A549 (cell line): ENCODE measurements at regions of chr5 and their contacts with region 1.

Region 1: GRCh38 chr5:39119404-39120051 is 45.3 kb upstream of the RICTOR start:
- DNase-seq: no peak
- ATAC-seq: no peak; a peak in 1 of 6 replicates
- H3K4me3 ChIP-seq: no peak overlapping the region; the same call in 2 of the 3 replicates
- H3K27ac ChIP-seq: peak overlapping the region in 1 of 2 experiments; percentile 59; a peak in 3 of 6 replicates
- H3K4me1 ChIP-seq: peaks cover 49% of the 10 kb centered on the region; the same call in 2 of the 3 replicates
- CTCF ChIP-seq: no peak
- EP300 ChIP-seq: no peak
- POLR2A ChIP-seq: no peak
- RAD21 ChIP-seq: no peak

Region 2: DNA sequence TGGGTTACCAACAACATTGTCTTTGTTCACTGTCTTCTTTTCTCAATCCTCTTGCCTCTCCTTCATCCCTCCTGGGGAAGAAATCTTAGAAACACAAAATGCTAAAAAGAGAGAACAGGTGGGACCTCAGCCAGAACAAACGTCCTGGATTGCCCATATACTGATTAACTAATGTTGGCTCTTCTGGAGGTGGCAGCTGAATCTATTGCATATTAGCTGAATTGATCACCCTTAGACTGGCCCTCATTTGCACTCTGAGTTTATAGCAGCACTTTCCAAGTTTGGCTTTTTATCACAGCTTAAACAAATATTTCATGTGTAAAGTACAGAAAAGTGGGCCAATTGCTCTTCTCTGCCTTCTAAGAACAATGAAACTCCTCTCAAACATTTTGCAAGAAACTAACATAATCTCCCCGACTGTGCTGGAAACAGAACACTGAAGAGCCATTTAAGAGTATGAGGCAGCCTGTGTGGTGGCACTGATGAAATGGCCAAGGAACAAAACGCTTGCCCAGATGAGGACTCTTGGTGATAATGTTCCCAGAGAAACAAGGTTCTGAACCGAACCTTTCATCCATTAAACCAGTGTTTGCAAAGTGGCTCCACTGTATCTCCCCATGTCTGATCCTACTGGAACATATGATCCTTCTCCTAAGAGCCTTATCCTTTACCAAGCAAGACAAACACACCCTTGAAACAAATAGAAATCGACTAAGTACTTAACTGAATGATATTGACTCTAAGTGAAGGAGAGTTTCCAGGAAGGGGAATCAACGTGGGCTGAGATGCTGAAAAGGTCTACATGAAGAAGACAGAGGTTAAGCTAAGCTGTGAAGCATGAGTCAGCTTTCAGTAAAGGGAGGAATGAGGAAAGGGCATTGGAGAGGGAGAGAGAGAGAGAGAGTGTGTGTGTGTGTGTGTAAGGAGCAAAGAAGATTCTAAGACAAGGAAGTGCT is 479.9 kb before region 1 on chr5:
- CTCF ChIA-PET with region 1: no interaction called
- POLR2A ChIA-PET with region 1: no interaction called
- DNase-seq: peak in 1 of 2 experiments; percentile 40
- ATAC-seq: peak; percentile 57 to 60; a peak in 4 of 6 replicates
- H3K4me3 ChIP-seq: no peak overlapping the region
- H3K27ac ChIP-seq: 0 out of 6 replicates have a peak overlapping the region, but pooled peaks of 1 of the 2 experiments have one; percentile 4
- H3K4me1 ChIP-seq: peaks cover 9% of the 10 kb centered on the region; the same call in 2 of the 3 replicates
- CTCF ChIP-seq: no peak
- EP300 ChIP-seq: no peak
- POLR2A ChIP-seq: no peak
- RAD21 ChIP-seq: no peak

Region 3: GRCh38 chr5:39031041-39031440 is 88.5 kb before region 1 on chr5:
- CTCF ChIA-PET with region 1: no interaction called
- POLR2A ChIA-PET with region 1: no interaction called
- DNase-seq: no peak
- ATAC-seq: no peak
- H3K4me3 ChIP-seq: no peak overlapping the region
- H3K27ac ChIP-seq: no peak overlapping the region
- H3K4me1 ChIP-seq: peaks cover 20% of the 10 kb centered on the region; the same call in 2 of the 3 replicates
- CTCF ChIP-seq: no peak
- EP300 ChIP-seq: no peak
- POLR2A ChIP-seq: no peak
- RAD21 ChIP-seq: no peak

Region 4: DNA sequence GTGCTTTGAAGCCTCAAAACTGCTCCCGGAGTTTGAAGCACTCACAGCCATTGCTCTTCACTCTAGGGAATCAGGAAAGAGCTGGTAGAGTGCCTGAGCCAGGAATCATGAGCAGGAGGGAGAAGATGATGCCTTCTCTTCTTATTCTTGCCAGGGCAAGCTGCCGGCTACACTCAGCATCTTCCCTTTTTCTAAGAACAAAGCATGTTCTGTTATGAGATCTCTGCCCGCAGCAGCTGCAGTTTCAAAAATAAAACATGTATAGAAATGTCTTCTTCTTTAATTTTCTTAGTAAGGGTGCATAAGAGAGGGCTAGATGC is 12.6 kb after region 1 on chr5:
- CTCF ChIA-PET with region 1: interaction called, 13 read pairs
- POLR2A ChIA-PET with region 1: interaction called, 3 read pairs
- DNase-seq: no peak
- ATAC-seq: peak; percentile 40 to 66; a peak in 3 of 6 replicates
- H3K4me3 ChIP-seq: no peak overlapping the region
- H3K27ac ChIP-seq: peak overlapping the region; percentile 36 to 54
- H3K4me1 ChIP-seq: peaks cover 32% of the 10 kb centered on the region
- CTCF ChIP-seq: no peak
- EP300 ChIP-seq: no peak
- POLR2A ChIP-seq: no peak
- RAD21 ChIP-seq: no peak

Region 5: DNA sequence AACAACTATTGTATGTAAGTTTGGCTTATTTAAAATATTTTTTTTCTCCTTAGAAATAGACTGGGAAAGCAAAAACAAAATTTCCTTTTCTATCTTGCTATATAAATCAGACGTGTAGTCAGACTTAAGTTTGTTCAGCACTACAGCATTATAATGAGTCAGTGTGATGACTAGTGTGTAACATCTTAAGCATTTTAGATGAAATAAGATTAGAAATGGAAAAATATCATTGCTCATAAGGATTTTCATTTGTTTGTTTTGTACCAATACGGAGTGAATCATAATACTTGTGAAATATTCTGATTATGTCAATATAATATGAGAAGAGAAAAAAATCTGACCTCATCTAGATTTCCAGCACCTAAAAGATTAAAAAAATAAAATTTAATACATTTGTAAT is 19.4 kb after region 1 on chr5:
- CTCF ChIA-PET with region 1: interaction called, 10 read pairs
- POLR2A ChIA-PET with region 1: no interaction called
- DNase-seq: peak; percentile 51 to 88
- ATAC-seq: peak; percentile 87
- H3K4me3 ChIP-seq: no peak overlapping the region
- H3K27ac ChIP-seq: peak overlapping the region in 1 of 2 experiments; percentile 71; a peak in 3 of 6 replicates
- H3K4me1 ChIP-seq: peaks cover 39% of the 10 kb centered on the region
- CTCF ChIP-seq: no peak
- EP300 ChIP-seq: peak in 1 of 2 experiments; percentile 82; a peak in 1 of 5 replicates
- POLR2A ChIP-seq: no peak
- RAD21 ChIP-seq: peak; percentile 24 to 58; a peak in 4 of 5 replicates